Heart left ventricle (tissue), 16 donors: ENCODE measurements at regions of chr9 and their contacts with region 1.

Region 1: GRCh38 chr9:14260101-14260500 is 53.8 kb downstream of the NFIB start:
- DNase-seq: no peak
- ATAC-seq: no peak
- H3K4me3 ChIP-seq: no peak overlapping the region
- H3K27ac ChIP-seq: no peak overlapping the region
- H3K4me1 ChIP-seq: peaks cover 3 to 95% (median 67%) of the 10 kb centered on the region in 12 donors
- H3K27me3 ChIP-seq: no peaks in the 10 kb centered on the region
- CTCF ChIP-seq: no peak
- POLR2A ChIP-seq: no peak

Region 2: GRCh38 chr9:14238552-14238951 is 21.5 kb before region 1 on chr9:
- intact Hi-C with region 1: no loop called
- DNase-seq: no peak
- ATAC-seq: peak; percentile 47 to 90 (median 72)
- H3K4me3 ChIP-seq: no peak overlapping the region
- H3K27ac ChIP-seq: peak overlapping the region in 11 of 12 donors; percentile 34 to 81 (median 72)
- H3K4me1 ChIP-seq: peaks cover 18 to 91% (median 67%) of the 10 kb centered on the region in 12 donors
- H3K27me3 ChIP-seq: no peaks in the 10 kb centered on the region
- CTCF ChIP-seq: no peak
- POLR2A ChIP-seq: no peak

Region 3: GRCh38 chr9:14296495-14297113 is 36.5 kb after region 1 on chr9:
- intact Hi-C with region 1: loop called in 4 of 10 experiments (anchors 5 to 10 kb)
- DNase-seq: peak in 4 of 5 donors; percentile 46 to 67 (median 58)
- ATAC-seq: peak in 1 of 4 donors; percentile 40
- H3K4me3 ChIP-seq: no peak overlapping the region
- H3K27ac ChIP-seq: peak overlapping the region in 7 of 12 donors; percentile 13 to 62 (median 18)
- H3K4me1 ChIP-seq: peaks cover 3 to 92% (median 60%) of the 10 kb centered on the region in 12 donors
- H3K27me3 ChIP-seq: no peaks in the 10 kb centered on the region
- CTCF ChIP-seq: no peak
- POLR2A ChIP-seq: no peak